Sciatic nerve (tissue), 2 donors: ENCODE measurements at regions of chr18 and their contacts with region 1.

Region 1: DNA sequence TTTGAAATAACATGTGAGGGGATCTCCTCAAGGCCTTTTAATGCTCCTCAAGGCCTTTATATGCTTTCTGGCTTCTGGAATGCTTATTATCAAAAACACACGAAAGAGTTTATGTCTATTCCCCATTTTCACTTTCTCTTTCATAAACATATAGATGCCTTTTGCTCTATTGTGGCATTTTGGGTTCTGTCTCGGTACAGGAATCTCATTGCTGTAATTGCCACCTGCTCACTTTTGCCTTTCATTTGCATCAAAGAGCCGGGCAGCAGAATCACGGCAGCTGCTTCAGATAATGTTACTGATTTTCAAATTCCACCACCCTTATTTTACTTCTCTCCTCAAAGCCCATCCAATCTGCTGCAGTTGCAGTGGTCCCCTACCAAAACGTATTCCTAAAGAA is 54.8 kb upstream of the LPIN2 start:
- DNase-seq: no peak
- ATAC-seq: no peak

Region 2: DNA sequence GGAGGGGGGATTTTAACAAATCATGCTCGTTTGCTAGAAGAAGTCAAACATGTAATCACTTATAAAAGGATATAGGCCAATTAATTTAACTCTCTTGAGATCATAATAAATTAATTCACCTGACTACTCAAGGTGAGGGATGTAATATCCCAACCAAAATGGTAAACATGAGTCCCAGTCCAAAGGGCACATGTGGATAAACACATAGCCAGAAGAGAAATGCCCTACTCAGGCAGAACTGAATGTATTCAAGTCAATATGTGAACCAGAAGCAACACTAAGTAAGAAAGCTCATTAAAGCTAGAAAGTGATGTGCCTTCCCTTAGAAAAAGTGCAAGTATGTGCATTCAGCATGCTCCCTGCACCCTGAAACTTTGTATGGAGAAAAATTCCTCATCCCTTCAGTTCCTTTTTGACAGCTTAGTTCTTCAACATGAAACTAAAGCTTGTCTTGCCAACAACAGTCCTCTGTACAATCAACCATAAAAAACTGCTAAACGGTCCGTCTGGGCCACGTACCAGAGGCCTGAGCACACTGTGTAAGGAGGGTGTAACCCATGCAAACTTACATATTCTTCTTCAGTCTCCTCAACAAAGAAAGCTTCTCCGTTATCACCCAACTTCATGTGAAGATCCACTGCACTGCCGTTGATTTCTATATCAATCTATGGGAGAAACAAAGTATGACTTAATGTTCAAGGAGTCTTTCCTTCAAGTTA is 113.6 kb before region 1 on chr18:
- intact Hi-C with region 1: loop called (anchors 5 kb)
- DNase-seq: no peak
- ATAC-seq: no peak

Region 3: GRCh38 chr18:2978646-2979045 is 89.1 kb before region 1 on chr18:
- intact Hi-C with region 1: no loop called
- DNase-seq: no peak
- ATAC-seq: peak; percentile 69

Region 4: DNA sequence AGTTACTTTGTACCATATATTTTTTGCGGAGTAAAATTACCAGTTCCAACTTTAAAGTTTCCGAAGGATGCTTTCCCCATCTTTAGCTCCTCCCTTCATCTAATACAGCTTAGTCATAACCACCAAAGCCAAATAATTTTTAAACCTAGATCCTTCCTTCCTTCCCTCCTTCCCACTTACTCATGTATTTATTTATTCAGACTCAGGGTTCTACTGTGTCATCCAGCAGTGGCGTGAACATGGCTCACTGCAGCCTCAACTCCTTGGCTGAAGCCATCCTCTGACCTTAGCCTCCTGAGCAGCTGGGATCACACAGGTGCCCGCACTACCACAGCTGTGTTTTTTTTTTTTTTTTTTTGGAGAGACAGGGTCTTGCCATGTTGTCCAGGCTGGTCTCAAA is 59.2 kb before region 1 on chr18:
- intact Hi-C with region 1: loop called (anchors 5 kb)
- DNase-seq: no peak
- ATAC-seq: no peak

Region 5: GRCh38 chr18:3466045-3466444 is 398.3 kb after region 1 on chr18:
- intact Hi-C with region 1: no loop called
- DNase-seq: no peak
- ATAC-seq: no peak